ENCODE measurements at regions of chr1 and their contacts with region 1.

Region 1: DNA sequence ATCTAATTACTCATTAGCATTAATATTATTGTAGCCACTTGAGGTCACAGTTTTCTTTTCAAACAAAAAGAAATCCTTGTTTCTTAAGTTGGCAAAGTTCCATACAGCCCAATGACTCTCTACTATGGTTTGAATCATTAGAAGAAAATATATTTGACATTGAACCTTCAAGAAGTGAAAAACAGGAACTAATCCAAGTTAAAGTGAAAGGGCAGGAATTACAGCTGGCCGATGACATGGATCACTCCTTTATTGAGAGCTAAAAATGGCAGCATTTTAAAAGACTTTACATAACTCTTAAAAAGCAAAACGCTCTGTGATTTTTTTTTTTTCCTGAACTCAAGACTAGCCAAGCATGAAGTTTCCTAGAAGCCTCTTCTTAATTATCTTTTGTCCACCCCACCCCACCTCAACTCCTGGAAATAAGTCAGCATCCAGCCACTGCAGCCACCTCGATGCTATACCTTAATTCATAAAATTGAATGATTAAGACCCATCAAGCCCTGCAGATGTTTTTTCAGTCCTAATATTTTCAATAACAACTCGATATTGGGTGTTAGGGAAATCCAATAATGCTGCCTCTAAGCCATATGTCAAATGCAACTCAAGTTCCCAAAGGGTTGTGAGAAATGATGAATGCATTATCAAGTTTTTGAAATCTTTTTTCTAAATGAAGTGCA is 323.1 kb downstream of the HHIPL2 start:
- DNase-seq: no peak
- ATAC-seq: no peak
- H3K4me3 ChIP-seq: no peak overlapping the region
- H3K4me3 Mint-ChIP-seq: no peak overlapping the region
- H3K27ac ChIP-seq: no peak overlapping the region
- H3K27ac Mint-ChIP-seq: no peak overlapping the region
- H3K4me1 ChIP-seq: no peaks in the 10 kb centered on the region
- H3K4me1 Mint-ChIP-seq: no peaks in the 10 kb centered on the region
- H3K27me3 ChIP-seq: no peaks in the 10 kb centered on the region
- H3K27me3 Mint-ChIP-seq: no peaks in the 10 kb centered on the region

Region 2: DNA sequence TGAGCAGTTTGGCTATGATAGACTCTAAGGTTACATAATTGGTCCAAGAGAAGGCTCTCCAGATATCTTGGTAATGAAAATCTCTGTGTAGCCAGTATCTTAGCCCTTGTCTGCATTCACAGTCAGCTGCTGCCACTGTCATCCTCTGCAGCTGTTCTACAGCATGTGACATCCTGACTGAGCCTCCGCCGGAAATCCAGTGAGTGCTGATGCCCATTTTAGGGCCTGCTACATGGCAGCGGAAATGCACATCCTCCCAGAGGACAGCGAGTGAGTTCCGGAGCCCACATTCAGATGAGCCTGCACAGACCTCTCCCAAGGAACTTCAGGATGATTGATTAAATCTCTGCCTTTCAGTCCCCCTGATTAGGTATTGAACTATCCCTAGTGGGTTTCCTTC is 86.1 kb after region 1 on chr1:
- CTCF ChIA-PET with region 1: no interaction called
- POLR2A ChIA-PET with region 1: no interaction called
- intact Hi-C with region 1: no loop called
- DNase-seq: peak in 6 of 9 donors; percentile 4 to 23 (median 16)
- ATAC-seq: peak; percentile 27
- H3K4me3 ChIP-seq: no peak overlapping the region
- H3K4me3 Mint-ChIP-seq: no peak overlapping the region
- H3K27ac ChIP-seq: no peak overlapping the region
- H3K27ac Mint-ChIP-seq: no peak overlapping the region
- H3K4me1 ChIP-seq: no peaks in the 10 kb centered on the region
- H3K4me1 Mint-ChIP-seq: peaks cover 4 to 28% (median 15%) of the 10 kb centered on the region in 7 donors
- H3K27me3 ChIP-seq: no peaks in the 10 kb centered on the region
- H3K27me3 Mint-ChIP-seq: no peaks in the 10 kb centered on the region

Region 3: DNA sequence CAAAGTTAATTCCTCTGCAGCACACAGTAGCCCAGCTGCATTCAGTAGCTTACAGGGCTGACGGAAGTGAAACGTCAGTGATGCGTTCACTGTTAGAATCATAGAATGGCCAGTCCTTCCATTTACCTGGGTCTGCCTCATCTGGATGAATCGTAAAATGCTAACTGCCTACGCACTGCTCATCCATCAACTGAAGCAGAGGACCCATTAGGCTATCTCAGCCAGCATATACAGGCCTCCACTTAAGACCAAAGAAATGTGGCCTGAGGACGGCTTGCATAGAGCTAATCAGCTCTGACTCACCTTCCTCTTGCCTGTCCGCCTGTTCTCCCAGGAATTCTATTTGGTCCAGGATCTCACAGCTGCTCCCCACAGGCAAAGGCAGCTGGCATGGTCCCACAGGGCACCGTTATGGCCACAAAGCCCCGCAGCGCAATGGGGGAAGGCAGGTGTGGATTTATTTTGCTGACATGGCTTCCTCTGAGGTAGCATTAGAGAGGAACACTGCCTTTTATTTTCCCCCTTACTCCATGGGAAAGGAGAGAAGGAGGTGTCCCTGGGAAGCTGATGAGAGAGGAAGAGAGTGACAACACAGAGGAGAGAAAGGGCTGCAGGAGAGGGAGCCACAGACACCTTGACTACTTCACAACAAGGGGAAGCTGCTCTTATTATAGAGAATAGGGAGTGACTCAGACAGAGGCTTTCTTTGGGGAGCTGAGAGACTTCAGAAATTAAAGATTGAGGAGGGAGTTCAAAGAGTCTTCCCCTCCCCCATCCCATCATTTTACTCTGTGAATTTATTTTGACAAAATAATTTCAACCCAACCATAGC is 145.5 kb after region 1 on chr1:
- CTCF ChIA-PET with region 1: no interaction called
- POLR2A ChIA-PET with region 1: no interaction called
- intact Hi-C with region 1: loop called in 1 of 2 experiments (anchors 10 kb)
- DNase-seq: no peak
- ATAC-seq: no peak
- H3K4me3 ChIP-seq: no peak overlapping the region
- H3K4me3 Mint-ChIP-seq: no peak overlapping the region
- H3K27ac ChIP-seq: no peak overlapping the region
- H3K27ac Mint-ChIP-seq: peak overlapping the region in 1 of 9 donors; percentile 70
- H3K4me1 ChIP-seq: no peaks in the 10 kb centered on the region
- H3K4me1 Mint-ChIP-seq: peaks cover 0 to 14% (median 5%) of the 10 kb centered on the region in 7 donors
- H3K27me3 ChIP-seq: no peaks in the 10 kb centered on the region
- H3K27me3 Mint-ChIP-seq: no peaks in the 10 kb centered on the region

Region 4: GRCh38 chr1:223219318-223219635 is 994.5 kb after region 1 on chr1:
- CTCF ChIA-PET with region 1: no interaction called
- POLR2A ChIA-PET with region 1: interaction called, 12 read pairs
- intact Hi-C with region 1: no loop called
- DNase-seq: no peak
- ATAC-seq: no peak
- H3K4me3 ChIP-seq: no peak overlapping the region
- H3K4me3 Mint-ChIP-seq: no peak overlapping the region
- H3K27ac ChIP-seq: no peak overlapping the region
- H3K27ac Mint-ChIP-seq: no peak overlapping the region
- H3K4me1 ChIP-seq: no peaks in the 10 kb centered on the region
- H3K4me1 Mint-ChIP-seq: peaks cover 0 to 16% (median 3%) of the 10 kb centered on the region in 7 donors
- H3K27me3 ChIP-seq: no peaks in the 10 kb centered on the region
- H3K27me3 Mint-ChIP-seq: no peaks in the 10 kb centered on the region

Measured in naive thymus-derived CD4-positive, alpha-beta T cell (primary cell).